Left lung (tissue), 14 donors: ENCODE measurements at regions of chr9 and their contacts with region 1.

Region 1: DNA sequence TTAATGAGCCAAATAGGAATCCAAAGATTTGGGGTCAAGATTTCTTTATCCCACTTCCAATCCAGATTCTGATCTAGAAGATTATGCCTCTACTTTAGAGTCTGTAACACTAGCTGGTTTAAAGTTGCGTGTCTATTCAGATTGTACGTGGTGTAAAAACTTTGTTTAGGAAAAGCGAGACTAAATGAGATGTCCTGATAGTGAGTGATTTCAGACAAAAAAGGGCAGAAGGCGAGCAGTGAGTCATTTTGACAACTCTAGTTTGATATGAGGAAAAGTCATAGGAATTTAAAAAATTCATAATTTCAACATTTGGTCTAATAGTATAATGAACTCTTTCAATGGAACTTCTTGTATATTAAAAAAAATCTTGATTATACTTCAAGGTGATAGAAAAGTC is 119.6 kb upstream of the KLF9 start:
- DNase-seq: no peak
- ATAC-seq: no peak
- H3K4me3 ChIP-seq: no peak overlapping the region
- H3K27ac ChIP-seq: no peak overlapping the region
- H3K4me1 ChIP-seq: no peaks in the 10 kb centered on the region
- H3K27me3 ChIP-seq: no peaks in the 10 kb centered on the region
- CTCF ChIP-seq: no peak

Region 2: GRCh38 chr9:70374962-70375618 is 159.0 kb before region 1 on chr9:
- intact Hi-C with region 1: no loop called
- DNase-seq: no peak
- ATAC-seq: peak; percentile 87
- H3K4me3 ChIP-seq: peak overlapping the region in 1 of 2 donors; percentile 3
- H3K27ac ChIP-seq: peak overlapping the region; percentile 15 to 26
- H3K4me1 ChIP-seq: no peaks in the 10 kb centered on the region
- H3K27me3 ChIP-seq: no peaks in the 10 kb centered on the region
- CTCF ChIP-seq: no peak

Region 3: GRCh38 chr9:70805949-70806348 is 271.9 kb after region 1 on chr9:
- intact Hi-C with region 1: no loop called
- DNase-seq: peak in 2 of 4 donors; percentile 2 to 16
- ATAC-seq: peak; percentile 59
- H3K4me3 ChIP-seq: no peak overlapping the region
- H3K27ac ChIP-seq: no peak overlapping the region
- H3K4me1 ChIP-seq: no peaks in the 10 kb centered on the region
- H3K27me3 ChIP-seq: no peaks in the 10 kb centered on the region
- CTCF ChIP-seq: no peak

Region 4: DNA sequence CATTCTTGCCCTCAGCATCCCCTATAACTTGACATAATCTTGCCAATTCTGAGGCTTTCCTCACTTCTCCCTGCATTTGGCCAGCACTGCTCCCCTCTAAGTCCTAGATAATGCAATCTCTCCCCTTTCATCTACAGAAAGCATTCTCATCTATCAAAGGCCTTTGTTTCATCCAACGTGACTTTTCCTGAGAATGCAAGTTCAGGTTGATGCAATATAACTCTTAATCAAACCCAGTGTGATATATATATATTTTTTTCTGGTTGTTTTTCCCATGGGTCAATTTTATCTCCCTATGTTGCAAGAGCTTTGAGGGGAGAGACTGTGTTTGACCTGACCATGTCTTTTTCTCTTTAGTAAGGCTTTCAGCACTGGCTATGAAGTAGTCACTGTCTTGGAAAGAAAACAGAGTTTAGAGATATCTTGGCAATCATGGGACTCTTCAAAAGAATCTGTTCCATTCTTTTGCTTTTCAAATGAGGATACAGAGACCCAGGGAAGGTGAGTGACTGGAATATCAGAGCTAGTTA is 318.7 kb after region 1 on chr9:
- intact Hi-C with region 1: loop called in 1 of 2 experiments (anchors 10 kb)
- DNase-seq: no peak
- ATAC-seq: no peak
- H3K4me3 ChIP-seq: no peak overlapping the region
- H3K27ac ChIP-seq: no peak overlapping the region
- H3K4me1 ChIP-seq: no peaks in the 10 kb centered on the region
- H3K27me3 ChIP-seq: no peaks in the 10 kb centered on the region
- CTCF ChIP-seq: no peak